Activated CD4-positive, alpha-beta T cell treated with anti-CD3 and anti-CD28 coated beads for 36 hours (primary cell): ENCODE measurements at regions of chr5 and their contacts with region 1.

Region 1: DNA sequence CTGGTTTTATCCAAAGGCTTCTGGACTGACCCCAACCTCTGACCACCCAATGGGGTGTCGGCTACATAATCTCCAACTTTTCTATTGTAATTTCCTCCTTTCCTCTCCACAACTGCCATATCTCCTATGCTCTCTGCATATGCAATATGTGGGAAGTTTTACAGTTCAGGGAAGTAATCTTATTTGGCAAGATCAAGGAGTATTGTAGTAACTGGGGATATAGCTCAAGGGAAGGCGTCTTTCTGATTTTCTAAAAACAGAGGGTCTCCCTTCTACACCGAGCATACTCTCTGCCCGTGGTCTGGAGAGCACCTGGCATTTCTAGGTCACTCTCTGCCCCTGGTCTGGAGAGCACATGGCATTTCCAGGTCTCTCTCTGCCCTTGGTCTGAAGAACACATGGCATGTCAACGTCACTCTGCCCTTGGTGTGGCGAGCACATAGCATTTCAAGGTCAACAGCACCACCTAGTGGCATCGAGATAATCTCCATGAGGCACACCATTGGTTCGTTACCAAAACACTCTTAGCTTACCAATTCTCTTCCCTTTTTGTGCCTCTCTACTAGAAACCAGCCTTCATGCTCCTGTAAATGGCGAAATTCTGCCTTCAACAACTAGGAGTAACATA is 616.4 kb upstream of the NUDT12 start:
- DNase-seq: peak; percentile 46
- ATAC-seq: no peak
- H3K4me3 Mint-ChIP-seq: no peak overlapping the region
- H3K27ac Mint-ChIP-seq: no peak overlapping the region
- H3K4me1 Mint-ChIP-seq: no peaks in the 10 kb centered on the region
- H3K27me3 Mint-ChIP-seq: no peaks in the 10 kb centered on the region

Region 2: GRCh38 chr5:103232393-103232999 is 946.4 kb before region 1 on chr5:
- CTCF ChIA-PET with region 1: no interaction called
- POLR2A ChIA-PET with region 1: no interaction called
- intact Hi-C with region 1: loop called in 1 of 2 experiments (anchors 10 kb)
- DNase-seq: peak; percentile 12
- ATAC-seq: peak; percentile 74
- H3K4me3 Mint-ChIP-seq: no peak overlapping the region
- H3K27ac Mint-ChIP-seq: no peak overlapping the region
- H3K4me1 Mint-ChIP-seq: no peaks in the 10 kb centered on the region
- H3K27me3 Mint-ChIP-seq: peaks cover 3% of the 10 kb centered on the region

Region 3: DNA sequence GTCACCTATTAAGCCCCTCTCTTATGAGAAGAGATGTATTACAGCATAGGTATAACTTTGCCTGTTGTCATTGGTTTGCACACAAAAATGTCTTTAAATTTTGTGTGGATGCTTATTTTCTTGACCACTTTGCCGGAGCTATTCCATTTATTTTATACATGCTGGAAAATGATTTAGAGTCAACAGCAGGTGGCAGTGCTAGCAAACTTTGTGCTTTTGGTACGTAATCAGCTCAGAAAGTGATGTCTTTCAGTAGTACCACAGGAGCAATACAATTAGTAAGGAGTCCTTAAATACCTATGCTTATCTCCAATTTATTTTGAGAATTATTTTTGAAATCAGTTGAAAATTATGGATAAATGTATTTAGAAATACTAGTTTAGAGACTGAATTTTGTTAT is 596.6 kb before region 1 on chr5:
- CTCF ChIA-PET with region 1: interaction called, 3 read pairs
- POLR2A ChIA-PET with region 1: no interaction called
- intact Hi-C with region 1: loop called (anchors 1 to 10 kb)
- DNase-seq: peak; percentile 40
- ATAC-seq: no peak
- H3K4me3 Mint-ChIP-seq: no peak overlapping the region
- H3K27ac Mint-ChIP-seq: no peak overlapping the region
- H3K4me1 Mint-ChIP-seq: no peaks in the 10 kb centered on the region
- H3K27me3 Mint-ChIP-seq: peaks cover 2% of the 10 kb centered on the region

Region 4: GRCh38 chr5:103808464-103809106 is 370.4 kb before region 1 on chr5:
- CTCF ChIA-PET with region 1: no interaction called
- POLR2A ChIA-PET with region 1: no interaction called
- intact Hi-C with region 1: loop called in 1 of 2 experiments (anchors 2 kb)
- DNase-seq: no peak
- ATAC-seq: no peak
- H3K4me3 Mint-ChIP-seq: no peak overlapping the region
- H3K27ac Mint-ChIP-seq: no peak overlapping the region
- H3K4me1 Mint-ChIP-seq: no peaks in the 10 kb centered on the region
- H3K27me3 Mint-ChIP-seq: no peaks in the 10 kb centered on the region